ENCODE measurements at regions of chr5 and their contacts with region 1.

Region 1: GRCh38 chr5:59673438-59674058 is 220.0 kb downstream of the PDE4D start:
- DNase-seq: peak; percentile 24
- H3K4me3 ChIP-seq: no peak overlapping the region; a peak in 1 of 4 replicates
- H3K27ac ChIP-seq: no peak overlapping the region
- H3K4me1 ChIP-seq: peaks cover 2 to 4% of the 10 kb centered on the region in 2 experiments; a peak in 3 of 4 replicates
- H3K27me3 ChIP-seq: no peaks in the 10 kb centered on the region
- CTCF ChIP-seq: peak; percentile 89
- EP300 ChIP-seq: no peak
- RAD21 ChIP-seq: peak; percentile 90

Region 2: DNA sequence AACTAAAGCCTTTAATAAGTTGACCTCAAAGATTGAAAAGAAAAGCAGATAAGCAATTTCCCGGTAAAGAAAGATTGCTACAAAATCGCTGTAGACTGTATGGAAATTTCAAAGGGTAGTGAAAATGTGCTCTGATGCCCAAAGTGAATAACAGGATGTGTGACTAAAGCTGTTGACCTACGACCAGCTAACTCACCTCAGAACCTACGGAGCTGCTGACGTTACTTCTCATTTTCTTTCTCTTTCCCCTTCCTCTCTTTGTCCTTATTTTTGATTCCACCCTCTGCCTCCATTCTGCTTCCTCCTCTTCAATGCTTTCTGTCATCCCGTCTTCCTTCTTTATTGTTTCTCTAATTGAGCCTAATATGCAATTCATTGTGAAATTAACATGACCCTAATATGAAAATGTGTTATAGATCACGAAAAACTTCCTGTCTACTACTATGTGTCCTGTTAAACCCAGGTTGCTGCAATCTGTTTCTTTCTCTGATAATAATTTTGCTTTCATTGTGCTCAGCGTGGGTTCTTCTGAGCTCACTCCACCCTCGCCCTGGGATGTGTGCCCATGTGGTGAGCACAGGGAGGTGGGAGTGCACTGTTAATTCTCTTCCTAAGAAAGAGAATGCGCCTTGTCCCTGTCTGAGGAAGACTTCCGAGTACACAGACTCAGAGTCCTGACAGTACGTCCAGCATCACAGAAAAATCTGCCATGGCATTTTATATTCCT is 117.0 kb after region 1 on chr5:
- CTCF ChIA-PET with region 1: interaction called, 25 read pairs
- POLR2A ChIA-PET with region 1: no interaction called
- DNase-seq: no peak
- H3K4me3 ChIP-seq: no peak overlapping the region
- H3K27ac ChIP-seq: no peak overlapping the region
- H3K4me1 ChIP-seq: peaks cover 22 to 31% of the 10 kb centered on the region in 2 experiments; a peak in 3 of 4 replicates
- H3K27me3 ChIP-seq: no peaks in the 10 kb centered on the region
- CTCF ChIP-seq: no peak
- EP300 ChIP-seq: no peak
- RAD21 ChIP-seq: no peak

Region 3: DNA sequence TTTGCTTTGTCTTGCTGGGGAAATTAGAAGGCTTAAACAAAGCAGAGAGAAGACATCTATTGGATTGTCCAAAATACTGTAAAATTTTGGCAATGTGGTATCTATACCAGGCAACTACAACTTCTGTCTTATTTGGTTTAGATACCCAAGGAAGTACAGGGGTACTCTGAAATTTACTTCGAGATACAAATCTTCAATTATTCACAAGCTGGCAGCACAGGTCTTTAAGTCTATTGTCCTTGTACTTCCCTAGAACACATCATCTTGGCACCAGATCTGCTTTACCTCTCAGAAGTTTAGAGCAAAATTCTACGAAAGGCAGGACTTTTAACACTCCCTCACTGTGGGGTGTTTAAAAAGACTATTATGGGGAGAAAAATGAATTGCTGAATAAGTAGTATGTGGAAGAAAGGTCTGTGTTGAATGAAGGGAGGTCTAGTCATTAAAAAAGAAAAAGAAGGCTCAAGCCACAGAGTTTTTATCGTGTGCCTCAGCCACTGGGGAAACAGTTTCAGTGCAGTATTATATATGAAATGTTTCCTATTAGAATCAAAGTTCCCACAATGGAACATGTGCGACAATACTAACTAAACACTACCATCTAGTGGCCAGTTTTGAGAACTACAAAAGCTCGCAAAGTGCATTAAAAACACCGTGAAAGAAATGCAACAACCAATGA is 126.3 kb after region 1 on chr5:
- CTCF ChIA-PET with region 1: interaction called, 15 read pairs
- POLR2A ChIA-PET with region 1: no interaction called
- DNase-seq: peak; percentile 37
- H3K4me3 ChIP-seq: no peak overlapping the region; a peak in 1 of 4 replicates
- H3K27ac ChIP-seq: peak overlapping the region; percentile 46 to 74; a peak in 3 of 4 replicates
- H3K4me1 ChIP-seq: peaks cover 10 to 15% of the 10 kb centered on the region in 2 experiments
- H3K27me3 ChIP-seq: no peaks in the 10 kb centered on the region
- CTCF ChIP-seq: peak; percentile 81
- EP300 ChIP-seq: no peak
- RAD21 ChIP-seq: peak; percentile 97

Region 4: GRCh38 chr5:59829386-59829785 is 155.8 kb after region 1 on chr5:
- CTCF ChIA-PET with region 1: no interaction called
- POLR2A ChIA-PET with region 1: no interaction called
- DNase-seq: no peak
- H3K4me3 ChIP-seq: no peak overlapping the region
- H3K27ac ChIP-seq: peak overlapping the region; percentile 21 to 78; a peak in 2 of 4 replicates
- H3K4me1 ChIP-seq: peaks cover 3 to 17% of the 10 kb centered on the region in 2 experiments
- H3K27me3 ChIP-seq: no peaks in the 10 kb centered on the region
- CTCF ChIP-seq: no peak
- EP300 ChIP-seq: peak; percentile 23 to 82; a peak in 3 of 4 replicates
- RAD21 ChIP-seq: no peak